ENCODE measurements at regions of chr6 and their contacts with region 1.

Region 1: GRCh38 chr6:110039364-110039980 is 61.4 kb downstream of the GPR6 start:
- DNase-seq: peak; percentile 73 to 77 (median 75)
- H3K4me3 ChIP-seq: peak overlapping the region; percentile 49 to 57
- H3K4me3 Mint-ChIP-seq: peak overlapping the region; percentile 88 to 96 (median 94)
- H3K27ac ChIP-seq: peak overlapping the region; percentile 34
- H3K27ac Mint-ChIP-seq: peak overlapping the region; percentile 59 to 94 (median 88)
- H3K4me1 ChIP-seq: peaks cover 11% of the 10 kb centered on the region
- H3K4me1 Mint-ChIP-seq: peaks cover 11 to 15% (median 13%) of the 10 kb centered on the region in 4 donors
- H3K27me3 ChIP-seq: no peaks in the 10 kb centered on the region
- H3K27me3 Mint-ChIP-seq: no peaks in the 10 kb centered on the region

Region 2: GRCh38 chr6:109440331-109441068 is 599.0 kb before region 1 on chr6 and contains the starts of genes PPIL6 and SMPD2:
- CTCF ChIA-PET with region 1: interaction called, 11 read pairs
- POLR2A ChIA-PET with region 1: interaction called, 4 read pairs
- intact Hi-C with region 1: no loop called
- DNase-seq: peak; percentile 77 to 84 (median 80)
- H3K4me3 ChIP-seq: peak within 1 kb of the TSS; percentile 69 to 82
- H3K4me3 Mint-ChIP-seq: peak within 1 kb of the TSS; percentile 91 to 98 (median 94)
- H3K27ac ChIP-seq: peak within 1 kb of the TSS; percentile 89
- H3K27ac Mint-ChIP-seq: peak within 1 kb of the TSS; percentile 96 to 98 (median 97)
- H3K4me1 ChIP-seq: peaks cover 25% of the 10 kb centered on the region
- H3K4me1 Mint-ChIP-seq: peaks cover 15 to 32% (median 21%) of the 10 kb centered on the region in 4 donors
- H3K27me3 ChIP-seq: no peaks in the 10 kb centered on the region
- H3K27me3 Mint-ChIP-seq: no peaks in the 10 kb centered on the region
- total RNA-seq, gene PPIL6: 0.39 to 0.52 TPM
- total RNA-seq, gene SMPD2: 21.7 to 23.6 TPM

Region 3: GRCh38 chr6:109690737-109691621 is 348.5 kb before region 1 on chr6 and contains the starts of genes AK9 and FIG4:
- CTCF ChIA-PET with region 1: interaction called, 25 read pairs
- POLR2A ChIA-PET with region 1: interaction called, 12 read pairs
- intact Hi-C with region 1: loop called (anchors 5 kb)
- DNase-seq: peak; percentile 82 to 90 (median 84)
- H3K4me3 ChIP-seq: peak within 1 kb of the TSS; percentile 87 to 89
- H3K4me3 Mint-ChIP-seq: peak within 1 kb of the TSS; percentile 95 to 100 (median 99)
- H3K27ac ChIP-seq: peak within 1 kb of the TSS; percentile 74
- H3K27ac Mint-ChIP-seq: peak within 1 kb of the TSS; percentile 93 to 99 (median 97)
- H3K4me1 ChIP-seq: peaks cover 26% of the 10 kb centered on the region
- H3K4me1 Mint-ChIP-seq: peaks cover 10 to 29% (median 22%) of the 10 kb centered on the region in 4 donors
- H3K27me3 ChIP-seq: no peaks in the 10 kb centered on the region
- H3K27me3 Mint-ChIP-seq: peaks cover 0 to 2% of the 10 kb centered on the region in 2 donors
- total RNA-seq, gene AK9: 15.6 to 18.4 TPM
- total RNA-seq, gene FIG4: 14.4 to 14.8 TPM

Region 4: DNA sequence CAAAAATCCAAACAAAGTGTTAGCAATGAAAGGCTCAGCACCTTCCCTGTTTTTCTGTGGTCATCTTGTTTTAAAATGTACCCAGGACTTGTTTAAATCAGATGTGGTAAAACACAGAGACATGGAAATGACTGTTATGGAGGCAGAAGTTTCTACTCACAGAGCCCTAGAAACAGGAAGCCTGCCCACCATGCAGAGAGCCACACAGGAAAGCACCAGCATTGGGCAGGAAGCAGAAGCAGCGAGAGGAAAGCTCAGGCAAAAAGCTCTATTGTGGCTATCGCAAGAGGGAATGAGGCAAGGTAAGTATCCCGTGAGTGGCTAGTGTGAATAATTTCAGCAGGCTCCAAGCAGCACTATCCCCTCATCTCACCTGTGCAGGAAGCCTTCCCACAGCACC is 18.6 kb before region 1 on chr6:
- CTCF ChIA-PET with region 1: interaction called, 35 read pairs
- POLR2A ChIA-PET with region 1: no interaction called
- intact Hi-C with region 1: no loop called
- DNase-seq: no peak
- H3K4me3 ChIP-seq: no peak overlapping the region
- H3K4me3 Mint-ChIP-seq: no peak overlapping the region
- H3K27ac ChIP-seq: no peak overlapping the region
- H3K27ac Mint-ChIP-seq: no peak overlapping the region
- H3K4me1 ChIP-seq: peaks cover 3% of the 10 kb centered on the region
- H3K4me1 Mint-ChIP-seq: peaks cover 0 to 11% (median 5%) of the 10 kb centered on the region in 4 donors
- H3K27me3 ChIP-seq: no peaks in the 10 kb centered on the region
- H3K27me3 Mint-ChIP-seq: peaks cover 4 to 5% of the 10 kb centered on the region in 2 donors

Region 5: GRCh38 chr6:110179401-110180227 is 140.1 kb after region 1 on chr6 and contains the start of gene WASF1:
- CTCF ChIA-PET with region 1: interaction called, 8 read pairs
- POLR2A ChIA-PET with region 1: interaction called, 14 read pairs
- intact Hi-C with region 1: loop called (anchors 1 kb)
- DNase-seq: peak; percentile 90 to 93 (median 92)
- H3K4me3 ChIP-seq: peak within 1 kb of the TSS; percentile 77 to 92
- H3K4me3 Mint-ChIP-seq: peak within 1 kb of the TSS; percentile 82 to 92 (median 86)
- H3K27ac ChIP-seq: peak within 1 kb of the TSS; percentile 88
- H3K27ac Mint-ChIP-seq: peak within 1 kb of the TSS; percentile 24 to 90 (median 64)
- H3K4me1 ChIP-seq: peaks cover 46% of the 10 kb centered on the region
- H3K4me1 Mint-ChIP-seq: peaks cover 5 to 7% (median 6%) of the 10 kb centered on the region in 4 donors
- H3K27me3 ChIP-seq: no peaks in the 10 kb centered on the region
- H3K27me3 Mint-ChIP-seq: peaks cover 4 to 5% of the 10 kb centered on the region in 2 donors
- total RNA-seq, gene WASF1: 0.39 to 0.70 TPM